Mammary epithelial cell (primary cell): ENCODE measurements at regions of chr15 and their contacts with region 1.

Region 1: GRCh38 chr15:34084086-34084485 is 17.6 kb downstream of the EMC7 start:
- DNase-seq: no peak
- H3K4me3 ChIP-seq: no peak overlapping the region
- H3K27ac ChIP-seq: no peak overlapping the region
- H3K4me1 ChIP-seq: no peaks in the 10 kb centered on the region
- H3K27me3 ChIP-seq: no peaks in the 10 kb centered on the region
- CTCF ChIP-seq: no peak

Region 2: DNA sequence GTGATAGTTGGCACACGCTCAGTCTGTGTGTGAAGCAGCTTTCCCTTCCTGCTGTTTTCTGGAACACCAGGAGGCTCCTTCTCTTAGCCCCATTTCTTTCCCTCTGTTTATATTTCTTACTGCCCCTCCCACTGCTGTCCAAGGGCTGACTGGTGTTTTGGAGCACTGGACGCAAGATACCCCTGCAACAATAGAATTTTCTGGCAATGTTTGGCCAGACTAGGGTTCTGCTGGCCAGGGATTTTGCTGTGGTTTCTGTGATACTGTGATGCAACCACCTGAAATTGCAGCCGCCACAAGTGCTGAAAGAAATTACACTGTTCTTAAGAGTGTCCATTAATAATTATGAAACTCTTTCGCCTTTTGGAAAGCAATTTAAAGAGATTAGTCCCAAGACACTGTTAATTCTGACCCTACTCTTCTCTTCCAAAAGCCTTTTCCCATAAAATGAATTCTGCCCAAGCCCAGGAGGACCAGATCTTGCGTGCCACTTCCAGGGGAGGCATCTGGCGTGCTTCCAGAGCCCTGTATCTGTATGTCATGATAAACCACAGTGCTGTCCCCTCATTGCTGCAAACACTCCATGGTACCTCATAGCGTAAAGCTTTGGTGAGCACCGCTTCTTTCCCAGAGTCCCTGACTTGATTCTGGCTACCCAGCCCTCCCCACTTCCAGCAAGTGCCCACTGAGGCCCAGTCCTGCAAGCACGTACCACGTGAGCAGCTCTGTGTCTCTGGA is 275.2 kb before region 1 on chr15:
- CTCF ChIA-PET with region 1: no interaction called
- dilution Hi-C with region 1: no loop called
- in situ Hi-C with region 1: no loop called
- intact Hi-C with region 1: no loop called
- DNase-seq: no peak
- H3K4me3 ChIP-seq: no peak overlapping the region
- H3K27ac ChIP-seq: no peak overlapping the region
- H3K4me1 ChIP-seq: peaks cover 5% of the 10 kb centered on the region
- H3K27me3 ChIP-seq: no peaks in the 10 kb centered on the region
- CTCF ChIP-seq: no peak

Region 3: GRCh38 chr15:34056936-34057335 is 27.1 kb before region 1 on chr15:
- CTCF ChIA-PET with region 1: no interaction called
- dilution Hi-C with region 1: no loop called
- in situ Hi-C with region 1: no loop called
- intact Hi-C with region 1: loop called (anchors 2 kb)
- DNase-seq: no peak
- H3K4me3 ChIP-seq: no peak overlapping the region
- H3K27ac ChIP-seq: no peak overlapping the region
- H3K4me1 ChIP-seq: peaks cover 9% of the 10 kb centered on the region
- H3K27me3 ChIP-seq: no peaks in the 10 kb centered on the region
- CTCF ChIP-seq: no peak